PC-9 (cell line): ENCODE measurements at regions of chr2 and their contacts with region 1.

Region 1: GRCh38 chr2:210476194-210477128 is at the start of gene LANCL1:
- DNase-seq: peak; percentile 70 to 76
- H3K4me3 ChIP-seq: peak within 1 kb of the TSS; percentile 54
- H3K27ac ChIP-seq: no peak within 1 kb of the TSS
- H3K4me1 ChIP-seq: 0 out of 2 replicates have a peak, but pooled peaks cover 9% of the 10 kb centered on the region
- H3K27me3 ChIP-seq: no peaks in the 10 kb centered on the region
- CTCF ChIP-seq: no peak
- total RNA-seq, gene LANCL1: 33.4 and 33.7 TPM in 2 replicates

Region 2: DNA sequence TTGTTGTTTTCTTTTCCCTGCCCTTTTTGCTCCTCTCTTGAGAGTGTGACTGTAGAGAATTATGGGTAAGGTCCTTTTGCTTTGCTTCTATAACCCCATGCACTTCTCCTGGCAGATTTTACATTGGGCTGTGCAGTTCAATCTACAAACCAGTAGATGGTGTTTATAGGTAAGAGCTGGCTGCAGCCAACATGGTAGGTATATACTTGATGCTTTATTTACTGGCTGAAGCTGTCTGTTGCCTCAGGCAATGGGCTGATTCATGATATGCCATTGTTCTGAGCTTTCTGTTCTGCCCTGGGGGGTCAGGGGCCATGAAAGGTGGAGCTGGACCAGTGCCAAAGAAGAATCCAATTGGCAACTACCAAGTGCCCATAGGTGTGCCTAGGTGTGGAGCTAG is 113.2 kb before region 1 on chr2:
- CTCF ChIA-PET with region 1: no interaction called
- POLR2A ChIA-PET with region 1: no interaction called
- intact Hi-C with region 1: no loop called
- DNase-seq: no peak
- H3K4me3 ChIP-seq: no peak overlapping the region
- H3K27ac ChIP-seq: no peak overlapping the region
- H3K4me1 ChIP-seq: no peaks in the 10 kb centered on the region
- H3K27me3 ChIP-seq: no peaks in the 10 kb centered on the region
- CTCF ChIP-seq: no peak; the same call in 1 of the 2 replicates

Region 3: DNA sequence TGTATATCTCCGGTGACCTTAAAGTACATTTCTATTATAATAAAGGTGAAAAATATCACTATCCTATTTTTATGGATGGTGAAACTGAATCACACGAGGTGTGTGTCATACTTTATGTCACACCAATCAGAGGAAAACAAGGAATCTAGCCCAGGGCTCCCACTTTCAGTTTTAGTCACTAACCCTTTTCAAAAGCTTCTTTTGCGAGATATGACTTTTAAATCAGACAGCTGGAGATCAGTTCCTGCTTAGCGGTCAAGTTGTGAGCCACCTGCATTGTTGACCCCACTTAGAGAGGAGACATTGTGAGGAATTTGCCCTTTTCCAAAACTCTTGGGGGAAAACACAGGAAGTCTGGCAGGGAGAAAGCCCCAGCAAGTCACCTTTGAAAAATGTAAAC is 150.4 kb after region 1 on chr2:
- CTCF ChIA-PET with region 1: no interaction called
- POLR2A ChIA-PET with region 1: interaction called, 11 read pairs
- intact Hi-C with region 1: no loop called
- DNase-seq: no peak
- H3K4me3 ChIP-seq: no peak overlapping the region
- H3K27ac ChIP-seq: no peak overlapping the region
- H3K4me1 ChIP-seq: no peaks in the 10 kb centered on the region
- H3K27me3 ChIP-seq: no peaks in the 10 kb centered on the region
- CTCF ChIP-seq: no peak

Region 4: GRCh38 chr2:211623096-211623495 is 1146.6 kb after region 1 on chr2:
- CTCF ChIA-PET with region 1: no interaction called
- POLR2A ChIA-PET with region 1: interaction called, 10 read pairs
- intact Hi-C with region 1: no loop called
- DNase-seq: no peak
- H3K4me3 ChIP-seq: no peak overlapping the region
- H3K27ac ChIP-seq: no peak overlapping the region
- H3K4me1 ChIP-seq: no peaks in the 10 kb centered on the region
- H3K27me3 ChIP-seq: no peaks in the 10 kb centered on the region
- CTCF ChIP-seq: no peak